A549 (cell line): ENCODE measurements at regions of chr2 and their contacts with region 1.

Region 1: GRCh38 chr2:164841719-164842623 is at the start of gene COBLL1:
- DNase-seq: peak; percentile 69 to 77
- ATAC-seq: peak; percentile 80 to 87
- H3K4me3 ChIP-seq: peak within 1 kb of the TSS; percentile 70
- H3K27ac ChIP-seq: peak within 1 kb of the TSS; percentile 88 to 95
- H3K4me1 ChIP-seq: peaks cover 25% of the 10 kb centered on the region
- CTCF ChIP-seq: peak; percentile 59
- EP300 ChIP-seq: no peak
- POLR2A ChIP-seq: no peak; the same call in 1 of the 2 replicates
- RAD21 ChIP-seq: peak; percentile 41 to 45; a peak in 4 of 5 replicates
- polyA plus RNA-seq, gene COBLL1: 5.3 and 7.1 TPM in 2 replicates

Region 2: DNA sequence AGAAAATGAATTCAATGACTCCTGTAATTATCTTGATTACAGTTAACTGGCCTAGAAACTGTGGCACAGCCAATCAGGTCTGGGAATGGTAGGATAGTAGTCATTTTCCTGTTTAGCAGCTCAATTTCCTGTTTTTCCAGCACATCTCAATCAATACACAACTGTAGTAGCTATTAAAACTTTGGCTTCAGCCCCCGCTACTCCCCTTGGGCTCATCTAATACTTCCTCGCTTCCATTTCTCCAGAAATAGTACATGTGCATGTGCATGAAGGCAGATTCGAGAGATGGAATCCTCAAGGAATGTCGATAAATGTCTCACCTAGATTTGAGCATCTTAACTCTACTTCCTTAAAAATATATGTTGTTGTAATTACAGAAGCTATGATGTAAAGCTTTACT is 10.1 kb before region 1 on chr2:
- CTCF ChIA-PET with region 1: interaction called, 17 read pairs
- POLR2A ChIA-PET with region 1: no interaction called
- DNase-seq: no peak
- ATAC-seq: no peak
- H3K4me3 ChIP-seq: no peak overlapping the region
- H3K27ac ChIP-seq: no peak overlapping the region
- H3K4me1 ChIP-seq: peaks cover 2% of the 10 kb centered on the region; the same call in 2 of the 3 replicates
- CTCF ChIP-seq: no peak
- EP300 ChIP-seq: no peak
- POLR2A ChIP-seq: no peak
- RAD21 ChIP-seq: no peak

Region 3: DNA sequence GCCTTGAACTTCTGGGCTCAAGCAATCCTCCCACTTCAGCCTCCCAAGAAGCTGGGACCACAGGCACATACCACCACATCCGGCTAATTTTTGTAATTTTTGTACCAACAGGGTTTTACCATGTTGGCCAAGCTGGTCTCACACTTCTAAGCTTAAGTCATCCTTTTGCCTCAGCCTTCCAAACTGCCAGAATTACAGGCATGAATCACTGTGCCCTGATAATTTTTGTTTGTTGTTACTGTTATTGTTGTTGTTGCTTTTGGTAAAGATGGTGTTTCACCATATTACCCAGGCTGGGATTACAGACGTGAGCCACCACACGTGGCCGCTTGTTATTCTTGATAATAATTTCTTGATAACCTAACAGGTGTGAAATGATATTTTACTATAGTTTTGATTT is 10.1 kb after region 1 on chr2:
- CTCF ChIA-PET with region 1: interaction called, 14 read pairs
- POLR2A ChIA-PET with region 1: no interaction called
- DNase-seq: no peak
- ATAC-seq: no peak
- H3K4me3 ChIP-seq: no peak overlapping the region
- H3K27ac ChIP-seq: no peak overlapping the region
- H3K4me1 ChIP-seq: no peaks in the 10 kb centered on the region
- CTCF ChIP-seq: no peak
- EP300 ChIP-seq: no peak
- POLR2A ChIP-seq: no peak
- RAD21 ChIP-seq: no peak

Region 4: DNA sequence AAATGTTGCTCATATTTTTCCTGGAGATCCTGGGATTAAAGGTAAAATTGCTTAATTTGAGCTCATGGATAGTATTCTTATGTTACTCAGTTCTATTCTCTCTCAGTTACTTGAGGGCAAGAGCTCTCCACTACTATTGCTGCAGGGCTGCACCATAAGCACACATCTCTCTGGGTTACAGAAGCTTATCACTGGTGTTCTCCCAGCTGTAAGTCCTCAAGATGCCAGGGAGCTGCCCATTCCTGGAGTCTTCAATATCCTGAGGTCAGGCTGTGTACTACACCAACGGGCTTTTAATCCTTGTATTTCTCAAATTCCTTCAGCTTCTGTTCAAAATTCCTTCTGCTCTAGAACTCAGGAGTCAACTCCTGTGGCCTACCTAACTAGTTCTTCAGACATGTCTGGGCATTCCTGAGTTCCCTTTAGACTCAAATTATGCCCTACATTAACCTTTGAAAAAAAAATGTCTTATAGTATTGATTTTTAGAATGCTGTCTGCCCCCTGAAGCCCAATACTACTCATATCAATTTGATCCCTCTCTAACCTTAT is 17.4 kb after region 1 on chr2:
- CTCF ChIA-PET with region 1: interaction called, 14 read pairs
- POLR2A ChIA-PET with region 1: interaction called, 3 read pairs
- DNase-seq: no peak
- ATAC-seq: no peak
- H3K4me3 ChIP-seq: no peak overlapping the region
- H3K27ac ChIP-seq: no peak overlapping the region
- H3K4me1 ChIP-seq: no peaks in the 10 kb centered on the region
- CTCF ChIP-seq: no peak
- EP300 ChIP-seq: no peak
- POLR2A ChIP-seq: no peak
- RAD21 ChIP-seq: no peak

Region 5: DNA sequence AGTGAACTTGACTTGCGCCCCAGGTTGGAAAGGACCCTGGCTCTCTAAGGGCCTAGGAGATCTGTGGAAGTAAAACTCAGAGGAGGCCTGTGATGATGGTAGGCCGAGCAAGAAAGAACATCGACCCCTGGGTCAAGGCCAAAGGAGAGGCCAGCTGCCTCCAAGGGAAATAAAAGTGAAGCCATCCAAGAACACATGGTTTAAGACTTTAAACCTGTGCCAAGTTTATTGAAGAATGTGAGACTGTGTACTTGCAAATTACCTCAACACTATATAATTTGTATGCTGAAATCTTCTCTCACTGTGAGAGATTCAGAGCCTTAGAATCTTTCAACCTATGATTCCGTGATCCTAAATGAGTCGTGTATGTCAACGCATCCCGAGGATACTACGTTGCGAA is 40.3 kb after region 1 on chr2:
- CTCF ChIA-PET with region 1: interaction called, 4 read pairs
- POLR2A ChIA-PET with region 1: interaction called, 15 read pairs
- DNase-seq: no peak
- ATAC-seq: no peak
- H3K4me3 ChIP-seq: no peak overlapping the region
- H3K27ac ChIP-seq: no peak overlapping the region
- H3K4me1 ChIP-seq: no peaks in the 10 kb centered on the region
- CTCF ChIP-seq: no peak
- EP300 ChIP-seq: no peak
- POLR2A ChIP-seq: no peak
- RAD21 ChIP-seq: no peak

Region 6: GRCh38 chr2:164890544-164890943 is 48.6 kb after region 1 on chr2:
- CTCF ChIA-PET with region 1: interaction called, 15 read pairs
- POLR2A ChIA-PET with region 1: no interaction called
- DNase-seq: no peak
- ATAC-seq: no peak
- H3K4me3 ChIP-seq: no peak overlapping the region
- H3K27ac ChIP-seq: no peak overlapping the region
- H3K4me1 ChIP-seq: no peaks in the 10 kb centered on the region
- CTCF ChIP-seq: no peak
- EP300 ChIP-seq: no peak
- POLR2A ChIP-seq: no peak
- RAD21 ChIP-seq: no peak

Region 7: DNA sequence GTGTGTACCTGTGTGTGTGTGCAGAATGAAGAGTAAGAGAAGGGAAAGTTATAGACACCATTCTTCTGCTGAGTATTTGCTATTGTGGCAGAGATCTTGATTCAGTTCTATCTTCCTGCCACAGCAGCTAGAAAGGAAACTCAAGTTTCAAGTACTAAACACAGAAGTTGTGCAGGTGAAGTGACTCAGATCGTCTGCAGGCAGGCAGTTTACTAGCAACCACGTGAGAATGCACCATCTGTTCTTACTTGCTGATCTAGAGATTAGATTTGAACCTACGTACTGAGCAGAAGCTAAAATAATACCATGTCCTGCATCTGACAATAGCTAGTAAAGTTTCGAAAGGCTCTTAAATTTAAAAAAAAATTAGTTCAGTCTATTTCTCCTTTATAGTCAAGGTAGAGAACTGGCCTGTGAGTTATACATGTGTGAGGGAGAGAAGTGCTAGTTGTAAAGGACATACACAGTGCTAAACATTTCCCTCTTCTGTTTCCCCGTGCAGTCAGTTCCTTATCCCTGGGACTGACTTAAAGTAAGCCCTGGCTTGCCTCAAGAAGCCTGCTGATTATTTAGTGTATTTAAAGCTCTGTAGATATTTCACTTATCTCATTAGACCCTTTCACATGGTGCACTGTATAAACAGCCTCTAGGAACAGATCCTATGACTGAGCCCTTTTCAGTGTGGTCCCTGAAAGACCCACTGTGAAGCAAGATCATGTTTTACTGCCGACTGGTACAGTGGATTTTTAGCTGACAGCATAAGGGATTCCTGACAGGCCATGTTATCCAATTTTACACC is 68.3 kb after region 1 on chr2:
- CTCF ChIA-PET with region 1: interaction called, 14 read pairs
- POLR2A ChIA-PET with region 1: interaction called, 10 read pairs
- DNase-seq: no peak
- ATAC-seq: peak; percentile 46 to 58; a peak in 4 of 6 replicates
- H3K4me3 ChIP-seq: no peak overlapping the region
- H3K27ac ChIP-seq: no peak overlapping the region; a peak in 1 of 6 replicates
- H3K4me1 ChIP-seq: peaks cover 29% of the 10 kb centered on the region; the same call in 2 of the 3 replicates
- CTCF ChIP-seq: no peak
- EP300 ChIP-seq: no peak
- POLR2A ChIP-seq: no peak
- RAD21 ChIP-seq: no peak